ENCODE measurements at regions of chr5 and their contacts with region 1.

Region 1: GRCh38 chr5:40386289-40386688 is 293.4 kb upstream of the PTGER4 start:
- DNase-seq: no peak
- H3K4me3 Mint-ChIP-seq: no peak overlapping the region
- H3K27ac Mint-ChIP-seq: peak overlapping the region; percentile 42
- H3K4me1 Mint-ChIP-seq: peaks cover 88% of the 10 kb centered on the region
- H3K27me3 Mint-ChIP-seq: no peaks in the 10 kb centered on the region

Region 2: DNA sequence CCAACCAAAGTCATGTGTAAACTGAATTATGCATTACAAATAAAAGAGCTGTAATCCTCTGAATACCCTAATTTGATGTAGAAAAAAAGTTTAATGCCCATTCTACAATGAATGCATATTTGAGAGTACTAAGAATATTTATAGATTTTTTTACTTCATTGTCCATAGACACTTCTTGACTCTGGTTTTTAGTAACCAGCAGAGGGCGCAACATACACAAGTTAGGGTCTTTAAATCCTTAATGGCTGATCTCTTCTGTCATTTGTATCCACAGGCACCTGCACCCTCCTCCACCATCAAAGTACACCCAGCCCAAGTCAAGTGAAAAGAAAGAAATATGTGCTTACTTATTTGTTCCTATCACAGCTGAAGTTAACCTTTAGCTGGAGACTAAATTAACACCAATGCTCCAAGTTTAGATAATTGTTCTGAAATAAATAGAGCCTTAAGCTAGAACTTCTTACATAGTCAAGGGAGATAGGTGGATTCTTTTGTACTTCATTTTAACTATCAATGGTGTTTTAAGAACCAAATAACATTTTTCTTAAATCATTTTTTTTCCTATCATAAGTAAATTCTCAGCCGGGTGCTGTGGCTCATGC is 437.3 kb before region 1 on chr5:
- intact Hi-C with region 1: loop called (anchors 5 kb)
- DNase-seq: peak; percentile 33
- H3K4me3 Mint-ChIP-seq: no peak overlapping the region
- H3K27ac Mint-ChIP-seq: no peak overlapping the region
- H3K4me1 Mint-ChIP-seq: peaks cover 3% of the 10 kb centered on the region
- H3K27me3 Mint-ChIP-seq: no peaks in the 10 kb centered on the region

Region 3: GRCh38 chr5:40307920-40308319 is 78.4 kb before region 1 on chr5:
- intact Hi-C with region 1: loop called (anchors 2 kb)
- DNase-seq: no peak
- H3K4me3 Mint-ChIP-seq: no peak overlapping the region
- H3K27ac Mint-ChIP-seq: no peak overlapping the region
- H3K4me1 Mint-ChIP-seq: peaks cover 19% of the 10 kb centered on the region
- H3K27me3 Mint-ChIP-seq: no peaks in the 10 kb centered on the region

Region 4: DNA sequence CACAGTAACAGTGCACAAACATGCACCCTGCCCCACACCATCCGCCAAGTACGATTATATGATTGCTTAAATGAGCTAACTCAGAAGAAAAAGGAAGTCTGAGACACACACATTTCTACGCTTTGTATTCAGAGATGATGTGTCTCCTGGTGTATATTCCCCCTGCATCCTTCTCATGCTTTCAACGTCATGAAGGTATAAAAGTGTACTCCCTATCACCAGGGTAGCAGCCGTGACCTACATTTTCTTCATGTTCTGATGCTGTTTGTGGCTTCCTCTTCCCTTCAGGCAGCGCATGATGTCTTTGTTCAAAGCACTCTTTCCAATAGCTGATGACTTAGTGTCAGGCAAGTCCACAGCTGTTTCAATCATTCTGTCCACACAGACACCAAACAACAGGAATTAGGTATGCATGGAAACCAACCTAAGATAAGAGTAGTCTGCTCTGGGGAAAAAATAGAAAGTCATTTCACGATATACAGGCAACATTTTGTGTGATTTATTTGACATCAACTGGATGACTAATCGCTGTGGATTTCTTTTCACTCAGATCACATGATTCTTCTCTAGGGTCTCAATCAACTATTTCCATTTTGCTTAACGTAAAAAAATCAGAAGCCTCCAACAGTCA is 24.1 kb after region 1 on chr5:
- intact Hi-C with region 1: loop called (anchors 1 kb)
- DNase-seq: peak; percentile 65
- H3K4me3 Mint-ChIP-seq: peak overlapping the region; percentile 66
- H3K27ac Mint-ChIP-seq: peak overlapping the region; percentile 90
- H3K4me1 Mint-ChIP-seq: peaks cover 58% of the 10 kb centered on the region
- H3K27me3 Mint-ChIP-seq: no peaks in the 10 kb centered on the region

Region 5: GRCh38 chr5:40480392-40480791 is 94.1 kb after region 1 on chr5:
- intact Hi-C with region 1: loop called (anchors 1 kb)
- DNase-seq: peak; percentile 46
- H3K4me3 Mint-ChIP-seq: no peak overlapping the region
- H3K27ac Mint-ChIP-seq: peak overlapping the region; percentile 65
- H3K4me1 Mint-ChIP-seq: peaks cover 60% of the 10 kb centered on the region
- H3K27me3 Mint-ChIP-seq: no peaks in the 10 kb centered on the region

Region 6: DNA sequence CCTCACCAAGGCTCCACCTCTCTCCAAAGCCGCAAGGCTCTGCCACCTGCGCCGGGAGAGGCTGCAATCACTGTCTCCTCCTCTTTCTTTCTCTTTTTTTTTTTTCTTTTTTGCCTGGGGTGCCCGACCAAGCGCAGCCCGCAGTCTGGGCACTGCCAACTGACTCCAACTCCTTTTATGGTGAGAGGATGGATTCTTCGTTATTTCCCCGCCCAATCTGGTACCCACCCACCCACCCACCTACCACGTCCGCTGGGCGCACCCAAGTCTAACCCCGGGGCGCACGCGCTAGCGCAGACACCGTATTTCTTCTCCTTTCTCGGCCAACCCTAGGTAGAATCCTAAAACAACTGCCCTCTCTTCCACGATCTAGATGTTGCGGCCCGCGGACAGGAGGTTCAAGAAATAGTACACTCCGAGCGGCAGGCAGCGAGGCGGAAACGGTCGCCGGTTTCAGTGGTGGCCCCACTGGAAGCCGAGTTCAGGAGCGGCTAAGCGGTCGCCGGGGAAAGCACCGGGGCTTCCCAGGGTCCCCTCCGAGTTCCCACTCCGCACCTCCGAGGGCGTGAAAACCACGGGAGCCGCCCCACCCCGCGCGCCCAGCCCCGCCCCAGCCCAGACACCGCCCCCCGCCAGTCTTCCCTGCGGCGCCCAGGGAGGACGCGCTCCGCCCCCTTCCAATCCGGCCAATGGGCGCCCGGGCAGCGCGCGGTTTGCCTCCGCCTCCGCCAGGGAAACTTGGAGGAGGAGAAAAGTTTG is 293.0 kb after region 1 on chr5:
- intact Hi-C with region 1: loop called (anchors 1 kb)
- DNase-seq: peak; percentile 90
- H3K4me3 Mint-ChIP-seq: peak overlapping the region; percentile 99
- H3K27ac Mint-ChIP-seq: peak overlapping the region; percentile 98
- H3K4me1 Mint-ChIP-seq: peaks cover 51% of the 10 kb centered on the region
- H3K27me3 Mint-ChIP-seq: no peaks in the 10 kb centered on the region